Ascending aorta (tissue), 2 donors: ENCODE measurements at regions of chr20 and their contacts with region 1.

Region 1: DNA sequence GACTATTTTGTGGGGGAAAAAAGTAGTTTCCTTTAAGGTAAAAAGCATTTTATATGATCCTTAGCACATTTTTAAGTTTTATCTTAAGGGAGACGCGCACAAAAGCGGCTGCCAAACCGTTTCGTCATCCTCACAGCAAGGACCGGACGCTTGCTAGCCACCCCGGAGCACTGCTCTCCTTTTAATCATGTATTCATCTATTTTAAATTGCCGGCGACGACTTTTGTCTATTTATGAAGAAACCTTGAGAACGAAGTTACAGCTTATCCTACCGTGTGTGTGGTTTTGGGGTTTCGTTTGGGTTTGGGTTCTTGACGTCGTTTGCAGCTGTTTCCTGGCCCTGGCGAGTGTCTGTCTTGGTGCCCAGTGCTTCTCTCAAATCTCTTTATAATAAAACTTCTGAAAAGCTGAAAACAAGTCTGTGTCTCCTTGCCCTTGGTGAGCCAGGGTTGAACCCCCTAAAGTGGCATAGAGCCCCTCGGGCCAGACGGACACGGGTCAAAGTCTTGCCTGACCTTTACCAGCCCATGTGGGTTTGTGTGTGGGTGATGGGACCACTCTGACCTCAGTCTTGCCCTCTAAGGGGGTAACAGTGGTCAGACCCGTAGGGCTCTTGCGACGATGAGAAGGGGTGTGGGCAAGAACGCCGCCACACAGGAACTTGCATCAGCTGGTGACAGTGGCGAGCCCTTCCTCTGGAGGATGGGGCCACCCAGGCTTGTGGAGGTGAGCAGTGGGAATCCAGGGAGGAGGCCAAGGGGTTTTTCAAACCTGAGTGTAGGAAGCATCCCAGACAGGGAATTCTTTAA is 117.6 kb downstream of the JPH2 start:
- DNase-seq: no peak
- H3K4me3 ChIP-seq: no peak overlapping the region
- H3K27ac ChIP-seq: no peak overlapping the region
- H3K4me1 ChIP-seq: no peaks in the 10 kb centered on the region
- H3K27me3 ChIP-seq: no peaks in the 10 kb centered on the region
- CTCF ChIP-seq: no peak

Region 2: GRCh38 chr20:43914311-43915210 is 154.8 kb before region 1 on chr20 and contains the start of gene TOX2:
- intact Hi-C with region 1: loop called (anchors 10 kb)
- DNase-seq: peak in 1 of 2 donors; percentile 74
- H3K4me3 ChIP-seq: peak within 1 kb of the TSS; percentile 55 to 71
- H3K27ac ChIP-seq: peak within 1 kb of the TSS in 1 of 2 donors; percentile 58
- H3K4me1 ChIP-seq: no peaks in the 10 kb centered on the region
- H3K27me3 ChIP-seq: no peaks in the 10 kb centered on the region
- CTCF ChIP-seq: no peak
- total RNA-seq, gene TOX2: 47.0 TPM